Breast epithelium (tissue), 4 donors: ENCODE measurements at regions of chr3 and their contacts with region 1.

Region 1: GRCh38 chr3:13114811-13115578 is 41.8 kb upstream of the IQSEC1 start:
- DNase-seq: peak in 1 of 2 donors; percentile 34
- H3K4me3 ChIP-seq: no peak overlapping the region
- H3K27ac ChIP-seq: no peak overlapping the region
- H3K4me1 ChIP-seq: no peaks in the 10 kb centered on the region
- H3K27me3 ChIP-seq: peaks cover 0 to 4% of the 10 kb centered on the region in 2 donors
- CTCF ChIP-seq: no peak
- POLR2A ChIP-seq: no peak

Region 2: DNA sequence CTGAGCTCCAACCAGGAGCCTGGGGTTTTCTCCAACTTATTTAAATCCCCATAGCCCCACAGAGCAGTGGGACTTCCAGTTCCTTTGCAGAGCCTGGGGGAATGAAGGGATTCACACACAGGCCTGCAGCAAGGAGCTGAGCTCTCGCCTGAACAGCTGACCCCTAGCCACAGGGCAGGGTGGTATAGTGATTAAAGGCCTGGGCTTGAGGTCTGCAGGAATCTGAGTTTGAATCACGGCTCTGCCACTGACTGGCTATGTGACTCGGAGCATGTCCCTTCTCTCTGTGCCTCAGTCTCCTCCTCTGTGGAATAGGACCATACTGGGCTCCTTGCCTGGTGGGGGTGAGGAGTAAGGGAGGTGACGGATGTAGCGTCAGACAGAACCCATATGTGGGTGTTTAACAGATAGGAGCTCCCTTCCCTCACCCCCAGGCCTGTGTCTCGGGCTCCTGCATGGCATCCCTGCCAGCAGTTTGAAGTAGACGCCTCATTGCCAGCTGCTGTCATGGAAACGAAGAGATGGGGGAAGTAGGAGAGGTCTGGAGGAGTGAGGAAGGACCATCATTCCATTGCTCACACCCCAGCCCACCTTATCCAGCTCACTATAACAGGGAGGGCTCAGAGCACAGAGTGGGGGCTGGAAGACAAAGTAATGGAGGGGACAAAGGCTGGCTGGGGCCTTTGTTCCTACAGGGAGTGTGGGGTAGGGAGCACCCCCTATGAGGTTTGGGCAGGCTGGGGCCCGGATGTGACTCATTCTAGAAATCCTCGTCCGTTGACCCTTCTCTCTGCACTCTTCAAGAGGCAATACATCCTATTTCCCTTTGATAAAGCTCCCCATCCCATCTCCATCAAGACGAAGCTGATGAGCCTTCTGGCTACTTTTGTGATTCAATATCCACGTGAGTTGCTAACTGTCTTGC is 1945.9 kb before region 1 on chr3:
- intact Hi-C with region 1: no loop called
- DNase-seq: no peak
- H3K4me3 ChIP-seq: no peak overlapping the region
- H3K27ac ChIP-seq: no peak overlapping the region
- H3K4me1 ChIP-seq: no peaks in the 10 kb centered on the region
- H3K27me3 ChIP-seq: no peaks in the 10 kb centered on the region
- CTCF ChIP-seq: no peak
- POLR2A ChIP-seq: no peak

Region 3: DNA sequence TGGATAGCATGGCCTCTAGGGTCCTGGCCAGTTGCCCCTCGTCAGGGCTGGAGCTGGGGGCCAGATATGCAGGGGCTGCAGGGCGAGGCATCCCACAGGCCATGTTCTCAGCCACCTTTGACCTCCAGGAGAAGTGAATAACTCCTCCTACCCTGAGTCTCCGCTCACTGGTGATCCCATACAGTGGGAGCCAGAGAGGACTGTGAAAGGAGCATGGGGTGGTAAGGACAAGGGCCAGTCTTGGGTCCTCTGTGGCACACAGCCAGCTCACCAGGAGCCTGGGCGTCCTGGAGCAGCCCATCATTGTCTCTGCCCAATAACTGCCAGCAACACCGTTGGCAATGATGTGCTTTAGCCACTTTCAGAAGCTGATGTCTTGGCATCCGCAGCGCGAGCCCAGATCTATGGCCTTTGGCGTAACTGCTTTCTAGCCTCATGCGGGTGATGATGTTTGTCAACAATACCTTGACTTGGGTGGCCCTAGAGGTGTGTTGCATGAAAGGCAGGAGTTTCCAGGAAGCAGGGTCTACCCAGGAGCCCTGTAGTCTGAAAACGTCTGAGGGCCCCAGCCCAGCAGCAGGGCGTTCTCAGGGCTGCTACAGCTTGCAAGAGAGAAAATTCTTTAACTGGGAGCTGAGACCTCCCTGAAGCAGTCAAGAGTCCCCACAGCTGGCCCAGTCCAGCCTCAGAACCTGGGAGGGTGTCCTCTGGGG is 19.3 kb after region 1 on chr3:
- intact Hi-C with region 1: loop called (anchors 1 kb)
- DNase-seq: peak in 1 of 2 donors; percentile 19
- H3K4me3 ChIP-seq: no peak overlapping the region
- H3K27ac ChIP-seq: no peak overlapping the region
- H3K4me1 ChIP-seq: no peaks in the 10 kb centered on the region
- H3K27me3 ChIP-seq: no peaks in the 10 kb centered on the region
- CTCF ChIP-seq: no peak
- POLR2A ChIP-seq: no peak

Region 4: DNA sequence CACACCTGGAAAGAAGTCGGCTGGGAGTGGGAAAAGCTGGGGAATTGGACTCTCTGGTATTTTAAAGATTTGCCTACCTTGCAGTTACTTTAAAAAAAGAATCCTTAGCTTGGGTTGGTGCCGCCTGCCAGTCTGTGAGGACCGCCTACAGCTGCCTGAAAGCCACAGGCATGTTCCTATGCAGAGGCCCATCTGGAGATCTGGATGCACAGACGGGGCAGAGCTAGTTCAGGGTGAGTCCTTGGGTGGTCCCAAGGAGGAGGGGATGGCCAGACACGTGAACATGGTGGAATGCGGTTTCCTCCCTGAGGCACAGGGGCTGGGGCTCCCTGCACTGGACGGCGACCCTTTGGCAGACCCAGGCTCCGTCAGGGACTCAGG is 71.4 kb after region 1 on chr3:
- intact Hi-C with region 1: no loop called
- DNase-seq: peak in 1 of 2 donors; percentile 34
- H3K4me3 ChIP-seq: no peak overlapping the region
- H3K27ac ChIP-seq: no peak overlapping the region
- H3K4me1 ChIP-seq: no peaks in the 10 kb centered on the region
- H3K27me3 ChIP-seq: no peaks in the 10 kb centered on the region
- CTCF ChIP-seq: no peak
- POLR2A ChIP-seq: no peak

Region 5: GRCh38 chr3:13600941-13601576 is 486.1 kb after region 1 on chr3:
- intact Hi-C with region 1: no loop called
- DNase-seq: no peak
- H3K4me3 ChIP-seq: no peak overlapping the region
- H3K27ac ChIP-seq: no peak overlapping the region
- H3K4me1 ChIP-seq: no peaks in the 10 kb centered on the region
- H3K27me3 ChIP-seq: no peaks in the 10 kb centered on the region
- CTCF ChIP-seq: no peak
- POLR2A ChIP-seq: no peak